ENCODE measurements at regions of chr2 and their contacts with region 1.

Region 1: DNA sequence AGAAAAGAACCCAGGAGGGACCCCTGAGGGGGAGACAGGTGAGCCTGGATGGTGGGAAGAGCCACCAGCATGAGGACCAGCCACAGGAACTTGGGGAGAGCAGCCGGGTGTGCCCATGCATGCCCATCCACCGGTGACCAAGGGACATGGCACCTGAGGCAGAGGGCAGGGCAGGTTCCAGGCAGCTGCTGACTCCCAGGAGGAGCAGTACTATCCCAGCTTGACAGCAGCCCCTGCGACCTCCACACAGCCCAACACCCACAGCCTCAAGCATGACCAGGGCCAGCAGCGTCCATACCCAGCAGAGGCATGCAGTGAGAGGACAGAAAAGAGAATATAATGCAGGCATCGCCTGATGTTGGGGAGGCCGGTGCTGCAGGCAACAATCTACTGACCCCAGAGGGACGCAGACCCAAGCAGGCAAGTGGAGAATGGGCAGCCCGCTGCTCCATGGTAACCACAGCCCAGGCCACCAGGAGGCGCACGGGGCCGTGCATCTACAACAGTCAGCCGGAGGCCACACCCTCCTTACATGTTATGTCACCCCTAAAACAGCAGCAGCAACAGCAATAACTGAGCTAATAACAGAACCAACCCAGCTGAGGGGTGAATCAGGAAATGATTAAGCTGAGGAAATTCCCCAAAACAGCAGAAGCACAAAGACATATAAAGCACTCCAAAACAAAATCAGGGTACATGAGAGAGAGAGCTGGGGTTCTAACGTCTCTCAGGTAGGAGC is 44.1 kb downstream of the ANKMY1 start:
- DNase-seq: peak; percentile 91 to 93
- ATAC-seq: peak; percentile 82
- H3K4me3 ChIP-seq: no peak overlapping the region
- H3K27ac ChIP-seq: no peak overlapping the region
- H3K4me1 ChIP-seq: no peaks in the 10 kb centered on the region
- H3K27me3 ChIP-seq: no peaks in the 10 kb centered on the region

Region 2: GRCh38 chr2:240043279-240043989 is 470.3 kb before region 1 on chr2:
- intact Hi-C with region 1: no loop called
- DNase-seq: no peak
- ATAC-seq: no peak
- H3K4me3 ChIP-seq: no peak overlapping the region
- H3K27ac ChIP-seq: no peak overlapping the region
- H3K4me1 ChIP-seq: no peaks in the 10 kb centered on the region
- H3K27me3 ChIP-seq: no peaks in the 10 kb centered on the region

Region 3: DNA sequence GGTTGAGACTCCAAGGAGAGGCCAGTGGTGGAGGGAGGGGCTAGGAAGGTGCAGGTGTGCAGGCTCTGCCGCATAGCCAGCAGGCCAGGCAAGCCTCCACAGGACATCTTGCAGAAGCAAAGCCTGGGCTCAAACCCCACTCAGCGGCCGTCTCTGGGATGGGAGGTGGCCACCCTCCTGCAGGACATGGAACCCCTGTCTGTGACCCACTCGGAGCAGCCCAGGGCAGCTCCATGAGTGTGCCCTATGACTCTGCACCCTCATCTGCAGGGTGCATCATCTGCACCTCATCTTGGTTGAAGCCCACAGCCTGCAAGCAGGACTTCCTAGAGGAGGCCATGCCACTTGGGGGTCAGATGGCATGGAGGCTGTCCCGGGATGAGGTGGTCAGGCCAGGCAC is 32.0 kb before region 1 on chr2:
- intact Hi-C with region 1: no loop called
- DNase-seq: peak in 1 of 2 donors; percentile 69
- ATAC-seq: peak; percentile 13
- H3K4me3 ChIP-seq: no peak overlapping the region
- H3K27ac ChIP-seq: no peak overlapping the region
- H3K4me1 ChIP-seq: no peaks in the 10 kb centered on the region
- H3K27me3 ChIP-seq: no peaks in the 10 kb centered on the region

Region 4: GRCh38 chr2:240704651-240705050 is 190.9 kb after region 1 on chr2:
- intact Hi-C with region 1: loop called (anchors 10 kb)
- DNase-seq: peak; percentile 35 to 63
- ATAC-seq: no peak
- H3K4me3 ChIP-seq: no peak overlapping the region
- H3K27ac ChIP-seq: no peak overlapping the region
- H3K4me1 ChIP-seq: no peaks in the 10 kb centered on the region
- H3K27me3 ChIP-seq: no peaks in the 10 kb centered on the region

Region 5: GRCh38 chr2:240840435-240841080 is 326.8 kb after region 1 on chr2:
- intact Hi-C with region 1: loop called in 1 of 2 experiments (anchors 5 kb)
- DNase-seq: no peak
- ATAC-seq: peak; percentile 61
- H3K4me3 ChIP-seq: no peak overlapping the region
- H3K27ac ChIP-seq: no peak overlapping the region
- H3K4me1 ChIP-seq: no peaks in the 10 kb centered on the region
- H3K27me3 ChIP-seq: no peaks in the 10 kb centered on the region

Measured in aorta (tissue), 5 donors.